ENCODE measurements at regions of chr11 and their contacts with region 1.

Region 1: GRCh38 chr11:82229341-82229740 is 504.3 kb downstream of the FAM181B start:
- ATAC-seq: peak in 4 of 8 experiments; percentile 31 to 52 (median 45)
- H3K4me3 ChIP-seq: no peak overlapping the region
- H3K27ac ChIP-seq: no peak overlapping the region
- H3K4me1 ChIP-seq: no peaks in the 10 kb centered on the region

Region 2: GRCh38 chr11:81644239-81644840 is 585.0 kb before region 1 on chr11:
- in situ Hi-C with region 1: loop called in 5 of 9 experiments (anchors 10 to 25 kb)
- ATAC-seq: peak in 4 of 8 experiments; percentile 44 to 91 (median 62)
- H3K4me3 ChIP-seq: no peak overlapping the region
- H3K27ac ChIP-seq: no peak overlapping the region
- H3K4me1 ChIP-seq: peaks cover 6 to 10% of the 10 kb centered on the region in 2 donors

Region 3: GRCh38 chr11:81658722-81659121 is 570.6 kb before region 1 on chr11:
- in situ Hi-C with region 1: loop called in 1 of 9 experiments (anchors 25 kb)
- ATAC-seq: peak in 2 of 8 experiments; percentile 37 to 54
- H3K4me3 ChIP-seq: no peak overlapping the region
- H3K27ac ChIP-seq: no peak overlapping the region
- H3K4me1 ChIP-seq: no peaks in the 10 kb centered on the region

Measured in motor neuron (in vitro differentiated cells).